A673 (cell line): ENCODE measurements at regions of chr1 and their contacts with region 1.

Region 1: GRCh38 chr1:28877132-28877781 is 37.1 kb upstream of the EPB41 start:
- DNase-seq: peak; percentile 85
- H3K4me3 ChIP-seq: no peak overlapping the region
- H3K27ac ChIP-seq: no peak overlapping the region
- H3K4me1 ChIP-seq: peaks cover 3% of the 10 kb centered on the region
- H3K27me3 ChIP-seq: no peaks in the 10 kb centered on the region
- CTCF ChIP-seq: peak; percentile 94

Region 2: DNA sequence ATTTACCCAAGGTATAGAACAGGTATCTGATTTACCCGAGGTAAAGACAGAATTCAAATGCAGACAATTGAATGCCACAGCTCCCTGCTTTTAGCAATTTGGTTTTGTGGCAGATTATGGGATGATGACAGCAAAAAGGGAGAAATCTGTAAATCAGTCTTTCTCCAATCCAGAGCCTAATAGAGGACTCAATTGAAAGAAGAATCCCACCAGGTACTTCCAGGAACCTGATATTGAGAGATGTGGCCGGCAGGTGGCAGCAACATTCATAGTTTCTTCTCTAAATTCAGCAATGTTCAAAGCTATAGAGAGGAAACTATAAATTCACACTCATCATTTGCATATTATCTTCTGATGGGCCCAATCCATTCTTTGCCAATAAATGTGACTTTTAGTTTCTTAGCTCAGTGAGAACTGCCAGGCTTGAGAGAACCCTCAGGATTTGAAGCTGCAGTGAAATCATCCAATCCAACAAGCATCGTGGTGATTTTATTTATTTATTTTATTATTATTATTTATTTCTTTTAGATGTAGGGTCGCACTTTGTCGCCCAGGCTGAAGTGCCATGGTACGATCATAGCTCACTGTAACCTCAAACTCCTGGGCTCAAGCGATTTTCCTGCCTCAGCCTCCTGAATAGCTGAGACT is 517.5 kb before region 1 on chr1:
- CTCF ChIA-PET with region 1: interaction called, 16 read pairs
- POLR2A ChIA-PET with region 1: no interaction called
- intact Hi-C with region 1: loop called (anchors 10 kb)
- DNase-seq: peak; percentile 83
- H3K4me3 ChIP-seq: no peak overlapping the region
- H3K27ac ChIP-seq: no peak overlapping the region
- H3K4me1 ChIP-seq: no peaks in the 10 kb centered on the region
- H3K27me3 ChIP-seq: no peaks in the 10 kb centered on the region
- CTCF ChIP-seq: peak; percentile 76

Region 3: GRCh38 chr1:28518000-28518744 is 359.1 kb before region 1 on chr1:
- CTCF ChIA-PET with region 1: interaction called, 4 read pairs
- POLR2A ChIA-PET with region 1: no interaction called
- intact Hi-C with region 1: loop called (anchors 2 kb)
- DNase-seq: peak; percentile 95
- H3K4me3 ChIP-seq: peak overlapping the region; percentile 66
- H3K27ac ChIP-seq: peak overlapping the region; percentile 96
- H3K4me1 ChIP-seq: peaks cover 14% of the 10 kb centered on the region
- H3K27me3 ChIP-seq: no peaks in the 10 kb centered on the region
- CTCF ChIP-seq: peak; percentile 95

Region 4: GRCh38 chr1:28648474-28649198 is 228.6 kb before region 1 on chr1 and contains the start of gene RNU11:
- CTCF ChIA-PET with region 1: interaction called, 8 read pairs
- POLR2A ChIA-PET with region 1: no interaction called
- intact Hi-C with region 1: loop called (anchors 5 kb)
- DNase-seq: peak; percentile 98
- H3K4me3 ChIP-seq: peak within 1 kb of the TSS; percentile 40
- H3K27ac ChIP-seq: peak within 1 kb of the TSS; percentile 100
- H3K4me1 ChIP-seq: peaks cover 9% of the 10 kb centered on the region
- H3K27me3 ChIP-seq: no peaks in the 10 kb centered on the region
- CTCF ChIP-seq: no peak; the same call in 1 of the 2 replicates
- total RNA-seq, gene RNU11: not detected in 2 replicates

Region 5: DNA sequence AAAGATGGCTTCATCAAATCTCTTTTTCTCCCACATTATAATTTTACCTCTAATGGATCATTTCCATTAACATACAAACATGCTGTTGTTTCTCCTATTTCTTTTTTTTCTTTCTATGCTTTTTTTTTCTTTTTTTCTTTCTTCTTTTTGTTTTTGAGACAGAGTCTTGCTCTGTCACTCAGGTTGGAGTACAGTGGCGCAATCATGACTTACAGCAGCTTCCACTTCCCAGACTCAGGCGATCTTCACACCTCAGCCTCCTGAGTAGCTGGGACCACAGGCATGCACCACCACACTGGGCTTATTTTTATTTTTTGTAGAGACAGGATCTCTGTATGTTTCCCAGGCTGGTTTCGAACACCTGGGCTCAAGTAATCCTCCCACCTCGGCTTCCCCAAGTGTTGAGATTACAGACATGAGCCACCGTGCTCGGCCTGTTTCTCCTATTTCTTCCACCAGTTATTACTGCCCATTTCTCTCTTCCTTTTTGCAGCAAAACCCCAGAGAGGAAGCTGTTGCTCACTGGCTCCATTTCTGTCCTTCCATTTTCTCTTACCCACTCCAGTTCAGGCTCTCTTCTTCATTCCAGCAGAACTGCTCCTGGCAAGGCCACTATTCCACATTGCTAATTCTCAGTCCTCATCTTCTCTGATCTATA is 97.4 kb before region 1 on chr1:
- CTCF ChIA-PET with region 1: interaction called, 55 read pairs
- POLR2A ChIA-PET with region 1: no interaction called
- intact Hi-C with region 1: loop called (anchors 1 kb)
- DNase-seq: no peak
- H3K4me3 ChIP-seq: no peak overlapping the region
- H3K27ac ChIP-seq: no peak overlapping the region
- H3K4me1 ChIP-seq: no peaks in the 10 kb centered on the region
- H3K27me3 ChIP-seq: no peaks in the 10 kb centered on the region
- CTCF ChIP-seq: no peak